WTC11 (cell line): ENCODE measurements at regions of chr11 and their contacts with region 1.

Region 1: GRCh38 chr11:65204646-65205601 is 23.2 kb downstream of the CAPN1 start:
- DNase-seq: peak; percentile 88
- ATAC-seq: peak; percentile 93
- H3K4me3 Mint-ChIP-seq: peak overlapping the region; percentile 60
- H3K27ac Mint-ChIP-seq: peak overlapping the region; percentile 93
- H3K4me1 Mint-ChIP-seq: peaks cover 16% of the 10 kb centered on the region
- H3K27me3 Mint-ChIP-seq: no peaks in the 10 kb centered on the region
- CTCF ChIP-seq: peak; percentile 99

Region 2: DNA sequence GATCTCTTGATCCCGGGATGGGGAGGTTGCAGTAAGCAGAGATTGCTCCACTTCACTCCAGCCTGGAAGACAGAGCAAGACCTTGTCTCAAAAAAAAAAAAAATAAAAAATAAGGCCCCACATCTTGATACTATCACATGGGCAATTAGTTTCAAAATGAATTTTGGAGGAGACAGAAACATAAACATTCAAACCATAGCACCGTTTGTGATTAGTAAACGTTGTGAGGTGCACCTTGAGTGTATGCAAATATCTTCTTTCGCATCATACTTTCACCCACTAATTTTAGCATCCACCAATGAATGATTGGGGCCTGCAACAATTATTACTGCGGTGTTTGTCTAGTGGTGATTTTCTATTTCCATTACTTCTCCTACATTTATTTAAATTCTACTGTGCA is 45.9 kb before region 1 on chr11:
- CTCF ChIA-PET with region 1: no interaction called
- POLR2A ChIA-PET with region 1: no interaction called
- DNase-seq: no peak
- ATAC-seq: no peak
- H3K4me3 Mint-ChIP-seq: no peak overlapping the region
- H3K27ac Mint-ChIP-seq: no peak overlapping the region
- H3K4me1 Mint-ChIP-seq: no peaks in the 10 kb centered on the region
- H3K27me3 Mint-ChIP-seq: peaks cover 7% of the 10 kb centered on the region
- CTCF ChIP-seq: no peak

Region 3: DNA sequence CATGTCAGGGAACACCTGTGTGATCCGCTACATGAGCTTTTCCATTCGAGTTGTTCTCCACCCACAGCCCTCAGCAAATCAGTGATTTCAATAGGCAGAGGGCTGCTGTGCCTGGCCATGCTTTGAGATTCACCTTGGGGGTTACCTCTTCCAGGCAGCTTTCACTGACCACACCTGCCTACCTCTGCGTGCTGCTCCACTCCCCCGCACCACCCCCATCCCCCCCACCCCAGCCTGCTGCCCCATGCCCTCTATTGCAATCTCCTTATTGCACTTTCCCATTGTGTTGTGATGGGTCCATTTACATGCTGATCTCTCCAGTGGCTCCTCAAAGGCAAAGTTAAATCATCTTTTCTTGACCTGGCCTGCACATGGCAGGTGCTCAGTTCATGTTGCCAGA is 38.8 kb after region 1 on chr11:
- CTCF ChIA-PET with region 1: interaction called, 21 read pairs
- POLR2A ChIA-PET with region 1: interaction called, 3 read pairs
- DNase-seq: no peak
- ATAC-seq: peak; percentile 81
- H3K4me3 Mint-ChIP-seq: no peak overlapping the region
- H3K27ac Mint-ChIP-seq: peak overlapping the region; percentile 76
- H3K4me1 Mint-ChIP-seq: peaks cover 20% of the 10 kb centered on the region
- H3K27me3 Mint-ChIP-seq: no peaks in the 10 kb centered on the region
- CTCF ChIP-seq: no peak

Region 4: GRCh38 chr11:65308281-65309093 is 103.6 kb after region 1 on chr11:
- CTCF ChIA-PET with region 1: no interaction called
- POLR2A ChIA-PET with region 1: no interaction called
- DNase-seq: no peak
- ATAC-seq: no peak
- H3K4me3 Mint-ChIP-seq: no peak overlapping the region
- H3K27ac Mint-ChIP-seq: no peak overlapping the region
- H3K4me1 Mint-ChIP-seq: peaks cover 6% of the 10 kb centered on the region
- H3K27me3 Mint-ChIP-seq: peaks cover 46% of the 10 kb centered on the region
- CTCF ChIP-seq: no peak

Region 5: GRCh38 chr11:65857853-65858638 is 653.1 kb after region 1 on chr11 and contains the start of gene CFL1:
- CTCF ChIA-PET with region 1: no interaction called
- POLR2A ChIA-PET with region 1: no interaction called
- DNase-seq: peak; percentile 98
- ATAC-seq: peak; percentile 62
- H3K4me3 Mint-ChIP-seq: peak within 1 kb of the TSS; percentile 91
- H3K27ac Mint-ChIP-seq: peak within 1 kb of the TSS; percentile 100
- H3K4me1 Mint-ChIP-seq: peaks cover 24% of the 10 kb centered on the region
- H3K27me3 Mint-ChIP-seq: no peaks in the 10 kb centered on the region
- CTCF ChIP-seq: no peak
- total RNA-seq, gene CFL1: 1,014 to 1,073 TPM (median 1,031 TPM) in 3 replicates